Left ventricle myocardium superior (tissue), 1 donor: ENCODE measurements at regions of chr1 and their contacts with region 1.

Region 1: GRCh38 chr1:64469977-64470664 is at the start of gene CACHD1:
- DNase-seq: peak; percentile 87
- ATAC-seq: peak; percentile 86
- total RNA-seq, gene CACHD1: 3.1 TPM

Region 2: DNA sequence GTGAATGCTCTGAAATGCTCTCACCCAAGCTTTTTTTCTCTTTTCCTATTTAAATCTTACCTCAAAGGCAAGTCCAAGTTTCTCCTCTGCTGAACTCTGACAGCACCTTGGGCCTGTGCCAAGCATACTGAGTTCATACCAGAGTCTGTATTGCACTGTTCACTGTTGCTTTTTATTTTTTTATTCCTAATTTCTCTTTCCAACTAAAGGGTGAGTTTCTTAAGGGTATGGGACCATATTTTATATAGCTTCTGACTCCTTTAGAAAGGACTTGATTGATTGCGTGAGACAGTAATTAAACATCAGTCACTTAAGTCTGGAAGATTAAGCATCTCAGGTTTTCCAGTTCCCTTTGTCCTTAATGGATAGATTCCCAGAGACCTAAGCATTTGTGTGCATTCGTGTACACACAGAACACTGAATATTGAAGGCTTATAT is 69.7 kb after region 1 on chr1:
- intact Hi-C with region 1: loop called (anchors 10 kb)
- DNase-seq: peak; percentile 70
- ATAC-seq: peak; percentile 62